Naive thymus-derived CD4-positive, alpha-beta T cell (primary cell): ENCODE measurements at regions of chr2 and their contacts with region 1.

Region 1: GRCh38 chr2:201118121-201118960 is 2.4 kb downstream of the CFLAR start:
- DNase-seq: peak; percentile 66 to 85 (median 79)
- ATAC-seq: peak; percentile 65
- H3K4me3 ChIP-seq: peak overlapping the region; percentile 87
- H3K4me3 Mint-ChIP-seq: peak overlapping the region; percentile 90 to 100 (median 97)
- H3K27ac ChIP-seq: peak overlapping the region; percentile 93
- H3K27ac Mint-ChIP-seq: peak overlapping the region; percentile 90 to 100 (median 98)
- H3K4me1 ChIP-seq: peaks cover 23 to 36% of the 10 kb centered on the region in 2 donors
- H3K4me1 Mint-ChIP-seq: peaks cover 31 to 64% (median 50%) of the 10 kb centered on the region in 7 donors
- H3K27me3 ChIP-seq: no peaks in the 10 kb centered on the region
- H3K27me3 Mint-ChIP-seq: peaks cover 0 to 2% (median 0%) of the 10 kb centered on the region in 5 donors

Region 2: GRCh38 chr2:200888704-200889625 is 229.4 kb before region 1 on chr2 and contains the starts of genes NIF3L1 and PPIL3:
- CTCF ChIA-PET with region 1: interaction called, 4 read pairs
- POLR2A ChIA-PET with region 1: interaction called, 19 read pairs
- intact Hi-C with region 1: loop called (anchors 1 kb)
- DNase-seq: peak; percentile 88 to 97 (median 95)
- ATAC-seq: peak; percentile 89
- H3K4me3 ChIP-seq: peak within 1 kb of the TSS; percentile 83
- H3K4me3 Mint-ChIP-seq: peak within 1 kb of the TSS; percentile 88 to 100 (median 96)
- H3K27ac ChIP-seq: peak within 1 kb of the TSS; percentile 86
- H3K27ac Mint-ChIP-seq: peak within 1 kb of the TSS; percentile 97 to 100 (median 100)
- H3K4me1 ChIP-seq: peaks cover 23 to 26% of the 10 kb centered on the region in 2 donors
- H3K4me1 Mint-ChIP-seq: peaks cover 35 to 75% (median 60%) of the 10 kb centered on the region in 7 donors
- H3K27me3 ChIP-seq: no peaks in the 10 kb centered on the region
- H3K27me3 Mint-ChIP-seq: no peaks in the 10 kb centered on the region
- total RNA-seq, gene NIF3L1: 11.5 to 33.9 (median 31.4) TPM
- total RNA-seq, gene PPIL3: 28.5 to 69.7 (median 49.1) TPM

Region 3: DNA sequence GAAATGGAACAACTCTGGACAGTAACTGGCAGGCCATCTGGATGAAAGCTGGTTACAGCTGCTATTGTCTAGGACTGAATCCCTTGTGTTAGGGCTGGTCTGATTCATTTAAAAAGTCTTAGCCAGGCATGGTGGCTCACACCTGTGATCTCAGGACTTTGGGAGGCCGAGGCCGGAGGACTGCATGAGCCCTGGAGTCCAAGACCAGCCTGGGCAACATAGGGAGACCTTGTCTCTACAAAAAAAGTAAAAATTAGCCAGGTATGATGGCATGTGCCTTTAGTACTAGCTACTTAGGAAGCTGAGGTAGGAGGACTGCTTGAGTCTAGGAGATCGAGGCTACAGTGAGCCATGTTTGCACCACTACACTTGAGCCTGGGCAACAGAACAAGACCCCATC is 17.8 kb before region 1 on chr2:
- CTCF ChIA-PET with region 1: interaction called, 6 read pairs
- POLR2A ChIA-PET with region 1: interaction called, 31 read pairs
- intact Hi-C with region 1: loop called in 1 of 2 experiments (anchors 1 kb)
- DNase-seq: no peak
- ATAC-seq: no peak
- H3K4me3 ChIP-seq: no peak overlapping the region
- H3K4me3 Mint-ChIP-seq: no peak overlapping the region
- H3K27ac ChIP-seq: no peak overlapping the region
- H3K27ac Mint-ChIP-seq: no peak overlapping the region
- H3K4me1 ChIP-seq: no peaks in the 10 kb centered on the region
- H3K4me1 Mint-ChIP-seq: no peaks in the 10 kb centered on the region
- H3K27me3 ChIP-seq: no peaks in the 10 kb centered on the region
- H3K27me3 Mint-ChIP-seq: no peaks in the 10 kb centered on the region

Region 4: DNA sequence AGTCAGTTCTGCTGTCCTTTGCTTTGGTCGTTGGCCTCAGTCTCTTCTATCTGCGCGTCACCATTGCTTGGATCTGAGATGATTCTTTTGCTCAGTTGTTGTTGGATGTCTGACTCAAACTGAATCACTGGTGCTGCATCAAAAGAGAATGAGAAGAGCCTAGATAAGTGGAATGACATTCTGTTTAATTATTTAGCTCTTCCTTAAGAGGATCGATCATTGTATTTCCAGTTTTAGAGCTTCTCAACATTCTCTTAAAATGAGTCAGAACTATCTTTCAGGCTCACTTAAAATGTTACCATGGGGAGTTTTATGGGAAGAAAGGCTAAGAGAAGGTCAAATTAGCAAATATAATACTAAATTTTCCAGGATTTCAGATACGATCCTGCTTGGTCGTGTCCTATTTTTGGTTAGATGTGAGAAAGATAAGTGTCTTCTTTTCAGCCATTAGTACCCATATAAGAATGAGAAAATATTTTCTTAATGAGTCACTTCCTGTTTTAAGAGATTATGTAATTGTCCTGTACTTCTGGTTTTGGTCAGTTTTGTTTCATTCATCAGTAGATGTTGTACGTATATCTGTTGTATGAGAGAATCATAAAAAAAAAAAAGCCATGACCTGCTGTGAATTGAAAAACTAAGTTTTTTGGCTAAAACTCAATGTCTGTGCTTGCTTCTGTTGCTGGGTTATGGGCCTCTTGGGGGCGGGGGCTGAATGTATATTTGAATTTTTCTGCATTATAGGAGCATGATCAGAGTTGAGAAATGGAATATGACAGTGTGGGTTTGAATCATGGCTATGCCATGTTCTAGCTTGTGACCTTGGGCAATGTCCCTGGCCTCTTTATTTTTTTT is 33.0 kb after region 1 on chr2:
- CTCF ChIA-PET with region 1: interaction called, 5 read pairs
- POLR2A ChIA-PET with region 1: interaction called, 30 read pairs
- intact Hi-C with region 1: no loop called
- DNase-seq: no peak
- ATAC-seq: peak; percentile 76
- H3K4me3 ChIP-seq: no peak overlapping the region
- H3K4me3 Mint-ChIP-seq: no peak overlapping the region
- H3K27ac ChIP-seq: peak overlapping the region; percentile 16
- H3K27ac Mint-ChIP-seq: peak overlapping the region in 8 of 9 donors; percentile 60 to 85 (median 81)
- H3K4me1 ChIP-seq: peaks cover 0 to 16% of the 10 kb centered on the region in 2 donors
- H3K4me1 Mint-ChIP-seq: peaks cover 4 to 38% (median 15%) of the 10 kb centered on the region in 7 donors
- H3K27me3 ChIP-seq: no peaks in the 10 kb centered on the region
- H3K27me3 Mint-ChIP-seq: no peaks in the 10 kb centered on the region

Region 5: DNA sequence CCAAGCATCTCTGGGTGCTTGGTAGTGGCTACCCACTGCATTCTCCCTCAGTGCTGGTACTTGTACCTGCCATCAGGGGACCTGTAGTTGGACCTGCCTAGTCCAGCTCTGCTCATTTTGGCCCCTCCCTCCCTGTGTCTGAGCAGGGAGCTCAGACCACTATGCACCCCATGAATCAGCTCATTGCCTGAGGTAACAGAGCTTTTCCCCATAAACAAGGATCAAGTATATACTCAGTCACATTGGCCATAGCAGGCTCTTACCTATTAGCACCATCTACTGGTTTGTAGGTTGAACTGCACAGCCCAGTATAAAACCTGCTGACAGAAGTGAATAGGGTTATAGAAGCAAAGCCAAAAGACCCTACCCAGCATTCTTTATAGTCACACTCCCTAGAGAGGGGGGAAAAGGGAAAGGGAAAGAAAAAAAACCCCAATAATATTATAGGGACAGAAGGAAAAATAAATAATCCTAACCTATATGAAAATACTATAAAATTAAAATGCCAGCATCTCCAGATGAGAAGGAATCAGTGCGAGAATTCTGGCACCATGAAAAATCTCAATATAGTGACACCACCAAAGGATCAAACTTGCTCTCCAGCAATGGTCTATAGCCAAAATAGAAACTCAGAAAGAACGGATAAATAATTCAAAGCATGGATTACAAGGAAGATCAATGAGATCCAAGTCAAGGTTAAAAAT is 245.7 kb after region 1 on chr2:
- CTCF ChIA-PET with region 1: no interaction called
- POLR2A ChIA-PET with region 1: no interaction called
- intact Hi-C with region 1: loop called in 1 of 2 experiments (anchors 2 kb)
- DNase-seq: peak in 7 of 9 donors; percentile 21 to 64 (median 61)
- ATAC-seq: peak; percentile 96
- H3K4me3 ChIP-seq: no peak overlapping the region
- H3K4me3 Mint-ChIP-seq: peak overlapping the region in 5 of 10 donors; percentile 11 to 49 (median 32)
- H3K27ac ChIP-seq: no peak overlapping the region
- H3K27ac Mint-ChIP-seq: peak overlapping the region in 7 of 9 donors; percentile 9 to 84 (median 75)
- H3K4me1 ChIP-seq: peaks cover 0 to 24% of the 10 kb centered on the region in 2 donors
- H3K4me1 Mint-ChIP-seq: peaks cover 11 to 45% (median 41%) of the 10 kb centered on the region in 7 donors
- H3K27me3 ChIP-seq: no peaks in the 10 kb centered on the region
- H3K27me3 Mint-ChIP-seq: no peaks in the 10 kb centered on the region

Region 6: GRCh38 chr2:201420442-201421113 is 302.2 kb after region 1 on chr2:
- CTCF ChIA-PET with region 1: no interaction called
- POLR2A ChIA-PET with region 1: no interaction called
- intact Hi-C with region 1: no loop called
- DNase-seq: no peak
- ATAC-seq: no peak
- H3K4me3 ChIP-seq: no peak overlapping the region
- H3K4me3 Mint-ChIP-seq: no peak overlapping the region
- H3K27ac ChIP-seq: no peak overlapping the region
- H3K27ac Mint-ChIP-seq: peak overlapping the region in 7 of 9 donors; percentile 55 to 91 (median 71)
- H3K4me1 ChIP-seq: peaks cover 7 to 15% of the 10 kb centered on the region in 2 donors
- H3K4me1 Mint-ChIP-seq: peaks cover 16 to 75% (median 62%) of the 10 kb centered on the region in 7 donors
- H3K27me3 ChIP-seq: no peaks in the 10 kb centered on the region
- H3K27me3 Mint-ChIP-seq: no peaks in the 10 kb centered on the region

Region 7: DNA sequence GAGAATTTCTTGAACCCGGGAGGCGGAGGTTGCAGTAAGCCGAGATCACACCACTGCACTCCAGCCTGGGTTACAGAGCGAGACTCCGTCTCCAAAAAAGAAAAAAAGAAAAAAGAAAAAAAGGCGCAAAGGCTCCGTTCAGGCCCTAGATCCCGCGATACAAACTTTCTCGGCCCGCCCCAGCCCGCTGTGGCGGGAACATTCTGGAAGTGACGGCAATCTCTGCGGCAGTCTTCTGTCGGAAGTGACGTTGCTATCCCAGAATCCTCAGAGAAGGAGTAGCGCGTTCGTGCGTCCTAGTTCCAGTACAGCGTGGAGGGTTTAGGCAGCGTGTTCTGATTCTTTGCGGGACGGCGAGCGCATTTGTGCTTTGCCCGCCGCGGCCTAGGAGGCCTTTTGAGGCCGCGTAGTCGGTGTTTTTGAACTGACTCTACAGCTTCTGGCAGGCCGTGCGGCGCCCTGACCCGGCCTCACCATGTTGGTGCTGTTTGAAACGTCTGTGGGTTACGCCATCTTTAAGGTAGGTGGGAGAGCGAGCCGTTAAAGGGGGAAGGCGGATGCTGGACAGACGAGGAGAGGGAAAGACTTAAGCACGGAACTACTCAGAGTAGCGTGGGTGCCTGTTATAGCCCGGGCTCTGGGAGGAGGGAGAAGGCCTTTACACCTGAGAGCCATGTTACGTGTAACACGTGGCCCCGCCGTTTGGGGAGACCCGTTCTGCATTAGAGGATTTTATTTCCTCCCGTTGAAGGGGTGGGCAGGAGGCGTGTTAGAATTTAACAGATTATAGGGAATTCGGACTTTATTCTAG is 1147.3 kb after region 1 on chr2 and contains the start of gene NOP58:
- CTCF ChIA-PET with region 1: no interaction called
- POLR2A ChIA-PET with region 1: interaction called, 3 read pairs
- intact Hi-C with region 1: loop called (anchors 2 to 5 kb)
- DNase-seq: peak; percentile 69 to 96 (median 93)
- ATAC-seq: peak; percentile 90
- H3K4me3 ChIP-seq: peak within 1 kb of the TSS; percentile 93
- H3K4me3 Mint-ChIP-seq: peak within 1 kb of the TSS in 9 of 10 donors; percentile 53 to 71 (median 64)
- H3K27ac ChIP-seq: peak within 1 kb of the TSS; percentile 92
- H3K27ac Mint-ChIP-seq: peak within 1 kb of the TSS in 6 of 9 donors; percentile 4 to 83 (median 76)
- H3K4me1 ChIP-seq: peaks cover 17 to 34% of the 10 kb centered on the region in 2 donors
- H3K4me1 Mint-ChIP-seq: peaks cover 11 to 27% (median 21%) of the 10 kb centered on the region in 7 donors
- H3K27me3 ChIP-seq: no peaks in the 10 kb centered on the region
- H3K27me3 Mint-ChIP-seq: no peaks in the 10 kb centered on the region
- total RNA-seq, gene NOP58: 105 to 259 (median 110) TPM